Panc1 (cell line): ENCODE measurements at regions of chr17 and their contacts with region 1.

Region 1: DNA sequence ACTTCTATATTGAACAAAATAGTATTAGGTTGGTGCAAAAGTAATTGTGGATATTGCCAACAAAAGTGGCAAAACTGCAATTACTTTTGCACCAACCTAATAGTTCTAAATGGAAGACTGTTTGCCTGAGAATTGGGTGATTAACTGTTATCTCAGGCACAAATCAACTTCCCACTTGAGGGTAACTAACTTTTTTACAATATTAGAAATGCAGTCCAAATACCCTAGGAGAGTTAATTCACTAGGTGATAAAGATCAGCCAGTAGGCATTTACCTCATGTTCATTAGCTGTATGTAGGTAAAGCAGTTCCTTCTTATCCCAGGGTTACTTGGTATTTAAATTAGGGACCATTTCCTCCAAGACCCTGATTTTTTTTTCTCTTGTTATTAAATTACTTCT is 86.6 kb downstream of the MARCHF10 start:
- DNase-seq: no peak
- ATAC-seq: no peak
- H3K4me3 ChIP-seq: no peak overlapping the region
- H3K27ac ChIP-seq: no peak overlapping the region
- H3K4me1 ChIP-seq: peaks cover 7% of the 10 kb centered on the region; the same call in 1 of the 2 replicates
- H3K27me3 ChIP-seq: no peaks in the 10 kb centered on the region
- CTCF ChIP-seq: no peak

Region 2: DNA sequence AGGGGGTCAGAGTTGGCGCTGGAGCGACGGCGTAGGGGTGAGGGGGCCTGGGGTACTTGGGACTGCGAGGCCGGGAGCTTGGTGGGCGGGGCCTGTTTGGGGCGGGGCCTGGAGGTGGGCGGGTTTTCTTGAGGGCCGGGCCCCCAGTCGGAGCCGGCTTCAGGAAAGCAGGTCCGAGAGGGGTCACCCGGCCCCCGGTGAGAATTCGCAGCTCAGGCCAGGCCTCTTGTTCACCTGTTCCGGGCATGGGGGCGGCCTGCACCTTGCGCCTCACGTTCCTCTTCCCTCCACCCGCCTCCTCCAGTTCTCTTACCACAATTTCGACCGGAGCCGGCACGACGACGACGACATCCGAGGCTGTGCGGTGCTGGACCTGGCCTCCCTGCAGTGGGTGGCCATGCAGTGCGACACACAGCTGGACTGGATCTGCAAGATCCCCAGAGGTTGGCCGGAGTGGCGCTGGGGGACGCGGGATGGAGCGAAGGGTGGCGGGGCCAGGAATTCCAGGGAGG is 41.5 kb before region 1 on chr17:
- CTCF ChIA-PET with region 1: interaction called, 10 read pairs
- POLR2A ChIA-PET with region 1: no interaction called
- in situ Hi-C with region 1: no loop called
- intact Hi-C with region 1: no loop called
- DNase-seq: no peak
- ATAC-seq: no peak
- H3K4me3 ChIP-seq: no peak overlapping the region
- H3K27ac ChIP-seq: no peak overlapping the region
- H3K4me1 ChIP-seq: no peaks in the 10 kb centered on the region
- H3K27me3 ChIP-seq: no peaks in the 10 kb centered on the region
- CTCF ChIP-seq: no peak

Region 3: GRCh38 chr17:62816282-62816839 is 94.9 kb after region 1 on chr17:
- CTCF ChIA-PET with region 1: no interaction called
- POLR2A ChIA-PET with region 1: no interaction called
- in situ Hi-C with region 1: no loop called
- intact Hi-C with region 1: no loop called
- DNase-seq: no peak
- ATAC-seq: no peak
- H3K4me3 ChIP-seq: no peak overlapping the region
- H3K27ac ChIP-seq: no peak overlapping the region
- H3K4me1 ChIP-seq: peaks cover 14% of the 10 kb centered on the region
- H3K27me3 ChIP-seq: no peaks in the 10 kb centered on the region
- CTCF ChIP-seq: no peak